OCI-LY7 (cell line): ENCODE measurements at regions of chr4 and their contacts with region 1.

Region 1: GRCh38 chr4:184282251-184282713 is 64.6 kb upstream of the ENPP6 start:
- DNase-seq: peak; percentile 87
- H3K4me3 ChIP-seq: peak overlapping the region; percentile 50
- H3K27ac ChIP-seq: peak overlapping the region; percentile 96
- H3K4me1 ChIP-seq: peaks cover 80% of the 10 kb centered on the region
- CTCF ChIP-seq: peak; percentile 66

Region 2: GRCh38 chr4:184163813-184164212 is 118.5 kb before region 1 on chr4:
- CTCF ChIA-PET with region 1: no interaction called
- POLR2A ChIA-PET with region 1: no interaction called
- intact Hi-C with region 1: no loop called
- DNase-seq: peak; percentile 23
- H3K4me3 ChIP-seq: no peak overlapping the region
- H3K27ac ChIP-seq: no peak overlapping the region
- H3K4me1 ChIP-seq: no peaks in the 10 kb centered on the region
- CTCF ChIP-seq: peak; percentile 67

Region 3: GRCh38 chr4:184310171-184310567 is 27.9 kb after region 1 on chr4:
- CTCF ChIA-PET with region 1: interaction called, 3 read pairs
- POLR2A ChIA-PET with region 1: interaction called, 15 read pairs
- intact Hi-C with region 1: loop called (anchors 1 kb)
- DNase-seq: peak; percentile 73
- H3K4me3 ChIP-seq: no peak overlapping the region
- H3K27ac ChIP-seq: no peak overlapping the region
- H3K4me1 ChIP-seq: peaks cover 56% of the 10 kb centered on the region
- CTCF ChIP-seq: peak; percentile 76

Region 4: DNA sequence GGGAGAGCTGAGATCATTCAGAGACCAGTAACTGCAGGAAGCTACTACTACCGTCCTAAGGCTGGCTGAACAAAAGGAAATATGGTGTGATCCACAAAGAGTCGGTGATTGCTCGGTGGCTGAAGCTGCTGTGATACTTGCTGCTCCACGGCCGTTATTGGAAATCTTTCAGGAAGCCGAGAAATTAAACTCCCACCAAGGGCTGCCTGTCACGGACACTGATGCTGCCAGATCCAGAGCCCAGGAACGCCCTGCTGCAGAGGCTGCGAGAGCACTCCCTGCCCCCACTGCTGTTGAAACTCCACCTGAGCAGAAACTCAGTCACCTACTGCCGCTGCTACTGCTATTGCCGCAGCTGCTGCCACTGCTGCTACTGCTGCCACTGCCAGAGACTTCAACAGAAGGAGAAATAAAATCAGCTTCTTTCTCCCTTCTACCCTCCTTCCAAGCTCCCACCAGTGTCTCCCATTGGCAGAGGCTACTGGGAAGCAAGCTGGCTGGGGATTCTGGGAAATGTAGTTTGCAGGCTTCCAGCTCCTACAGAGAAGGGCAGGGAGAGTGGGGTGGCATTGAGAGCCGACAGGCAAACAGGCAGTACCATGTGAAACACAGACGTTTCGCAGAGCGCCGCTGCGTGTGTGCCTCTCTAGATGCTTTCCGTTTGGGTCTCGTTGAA is 61.4 kb after region 1 on chr4:
- CTCF ChIA-PET with region 1: no interaction called
- POLR2A ChIA-PET with region 1: interaction called, 46 read pairs
- intact Hi-C with region 1: loop called (anchors 1 kb)
- DNase-seq: peak; percentile 64
- H3K4me3 ChIP-seq: peak overlapping the region; percentile 61
- H3K27ac ChIP-seq: peak overlapping the region; percentile 26
- H3K4me1 ChIP-seq: peaks cover 66% of the 10 kb centered on the region
- CTCF ChIP-seq: no peak

Region 5: DNA sequence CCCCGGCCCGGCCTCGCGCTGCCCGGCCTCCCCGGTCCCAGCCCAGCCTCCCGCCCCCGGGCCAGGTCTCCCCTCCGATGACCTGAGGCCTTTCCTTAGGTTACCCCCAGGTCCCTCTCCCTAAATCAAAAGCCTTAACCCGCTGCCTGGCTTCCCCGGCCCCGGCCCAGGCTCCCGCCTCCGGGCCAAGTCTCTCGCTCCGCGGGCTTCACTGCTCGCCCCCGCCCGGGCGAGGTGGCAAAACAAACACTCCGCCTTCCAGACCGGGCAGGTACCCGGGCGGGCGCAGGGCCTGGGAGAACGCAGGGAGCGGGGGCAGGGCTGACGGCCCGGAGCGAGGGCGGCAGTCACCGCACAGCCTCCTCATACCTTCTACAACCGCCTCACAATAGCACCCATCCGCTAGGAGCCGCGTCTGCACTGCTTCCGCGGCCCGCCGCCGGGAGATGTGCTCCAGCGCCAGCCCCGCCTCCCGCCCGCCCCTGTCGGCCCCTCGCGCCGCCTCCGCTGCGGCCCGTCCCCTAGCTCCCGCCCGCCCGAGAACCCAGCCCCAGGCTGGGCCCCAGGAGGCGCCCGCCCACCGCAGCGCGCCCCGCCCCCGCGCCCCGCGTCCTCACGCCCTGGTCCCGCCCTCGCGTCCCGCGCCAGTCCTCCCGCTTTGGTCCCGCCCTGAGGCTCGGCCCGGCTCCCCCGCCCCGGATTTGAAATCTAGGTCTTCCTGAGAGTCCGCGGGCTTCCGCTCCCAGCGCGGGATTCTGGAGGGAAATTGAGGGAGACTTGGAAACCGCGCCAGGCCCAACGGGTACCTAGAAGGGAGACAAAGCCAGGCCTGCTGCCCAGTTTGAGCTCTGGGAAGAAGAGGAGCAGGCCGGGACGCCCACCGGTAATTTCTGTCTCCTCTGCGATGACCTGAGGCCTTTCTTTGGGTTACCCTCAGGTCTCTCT is 367.0 kb after region 1 on chr4 and contains the starts of genes CASP3 and PRIMPOL:
- CTCF ChIA-PET with region 1: no interaction called
- POLR2A ChIA-PET with region 1: interaction called, 5 read pairs
- intact Hi-C with region 1: loop called (anchors 1 kb)
- DNase-seq: peak; percentile 96
- H3K4me3 ChIP-seq: peak within 1 kb of the TSS; percentile 93
- H3K27ac ChIP-seq: peak within 1 kb of the TSS; percentile 79
- H3K4me1 ChIP-seq: peaks cover 42% of the 10 kb centered on the region
- CTCF ChIP-seq: 0 out of 2 replicates have a peak, but pooled peaks have one; percentile 21
- total RNA-seq, gene CASP3: 25.8 and 29.5 TPM in 2 replicates
- total RNA-seq, gene PRIMPOL: 8.8 and 9.2 TPM in 2 replicates

Region 6: GRCh38 chr4:184815046-184815877 is 533.0 kb after region 1 on chr4:
- CTCF ChIA-PET with region 1: no interaction called
- POLR2A ChIA-PET with region 1: no interaction called
- intact Hi-C with region 1: loop called (anchors 5 kb)
- DNase-seq: peak; percentile 76
- H3K4me3 ChIP-seq: peak overlapping the region; percentile 49
- H3K27ac ChIP-seq: peak overlapping the region; percentile 84
- H3K4me1 ChIP-seq: peaks cover 68% of the 10 kb centered on the region
- CTCF ChIP-seq: no peak

Region 7: GRCh38 chr4:184896868-184897715 is 614.8 kb after region 1 on chr4:
- CTCF ChIA-PET with region 1: no interaction called
- POLR2A ChIA-PET with region 1: no interaction called
- intact Hi-C with region 1: no loop called
- DNase-seq: no peak
- H3K4me3 ChIP-seq: no peak overlapping the region
- H3K27ac ChIP-seq: no peak overlapping the region
- H3K4me1 ChIP-seq: no peaks in the 10 kb centered on the region
- CTCF ChIP-seq: no peak